ENCODE measurements at regions of chr1 and their contacts with region 1.

Region 1: GRCh38 chr1:26771643-26772321 is 16.0 kb upstream of the PIGV start:
- DNase-seq: peak in 1 of 2 donors; percentile 72
- ATAC-seq: peak; percentile 78
- H3K4me3 ChIP-seq: no peak overlapping the region
- H3K27ac ChIP-seq: peak overlapping the region in 1 of 2 donors; percentile 72
- H3K4me1 ChIP-seq: peaks cover 3 to 10% of the 10 kb centered on the region in 2 donors
- H3K27me3 ChIP-seq: no peaks in the 10 kb centered on the region

Region 2: GRCh38 chr1:25695090-25695770 is 1076.6 kb before region 1 on chr1:
- intact Hi-C with region 1: no loop called
- DNase-seq: peak; percentile 92 to 93
- ATAC-seq: peak; percentile 92
- H3K4me3 ChIP-seq: no peak overlapping the region
- H3K27ac ChIP-seq: peak overlapping the region in 1 of 2 donors; percentile 87
- H3K4me1 ChIP-seq: peaks cover 3 to 4% of the 10 kb centered on the region in 2 donors
- H3K27me3 ChIP-seq: no peaks in the 10 kb centered on the region

Region 3: GRCh38 chr1:26733982-26734381 is 37.8 kb before region 1 on chr1:
- intact Hi-C with region 1: loop called in 1 of 2 experiments (anchors 5 kb)
- DNase-seq: no peak
- ATAC-seq: no peak
- H3K4me3 ChIP-seq: no peak overlapping the region
- H3K27ac ChIP-seq: no peak overlapping the region
- H3K4me1 ChIP-seq: peaks cover 0 to 1% of the 10 kb centered on the region in 2 donors
- H3K27me3 ChIP-seq: no peaks in the 10 kb centered on the region

Region 4: DNA sequence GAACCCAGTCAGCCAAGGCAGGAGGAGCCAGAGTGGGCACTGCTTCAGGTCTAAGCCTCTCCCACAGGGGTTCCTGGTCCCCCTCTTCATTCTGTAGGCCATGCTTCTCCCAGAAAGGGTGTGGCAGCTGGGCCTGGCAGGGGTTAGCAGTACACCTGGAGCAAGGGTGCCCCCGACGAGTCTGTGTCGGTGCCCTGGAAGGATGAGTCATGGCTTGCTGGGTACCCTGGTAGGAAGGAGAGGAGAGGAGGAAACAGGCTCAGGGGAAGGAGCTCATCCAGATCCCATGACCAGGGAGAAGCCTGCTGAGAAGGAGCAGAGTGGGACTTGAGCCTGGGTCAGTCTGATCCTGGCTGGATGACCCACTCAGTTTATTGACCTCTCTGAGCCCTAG is 178.1 kb after region 1 on chr1:
- intact Hi-C with region 1: no loop called
- DNase-seq: no peak
- ATAC-seq: no peak
- H3K4me3 ChIP-seq: no peak overlapping the region
- H3K27ac ChIP-seq: no peak overlapping the region
- H3K4me1 ChIP-seq: no peaks in the 10 kb centered on the region
- H3K27me3 ChIP-seq: no peaks in the 10 kb centered on the region